GM10248 (cell line): ENCODE measurements at regions of chr2 and their contacts with region 1.

Region 1: GRCh38 chr2:85266146-85267041 is 61.4 kb downstream of the TGOLN2 start:
- DNase-seq: peak; percentile 78
- CTCF ChIP-seq: peak; percentile 82

Region 2: DNA sequence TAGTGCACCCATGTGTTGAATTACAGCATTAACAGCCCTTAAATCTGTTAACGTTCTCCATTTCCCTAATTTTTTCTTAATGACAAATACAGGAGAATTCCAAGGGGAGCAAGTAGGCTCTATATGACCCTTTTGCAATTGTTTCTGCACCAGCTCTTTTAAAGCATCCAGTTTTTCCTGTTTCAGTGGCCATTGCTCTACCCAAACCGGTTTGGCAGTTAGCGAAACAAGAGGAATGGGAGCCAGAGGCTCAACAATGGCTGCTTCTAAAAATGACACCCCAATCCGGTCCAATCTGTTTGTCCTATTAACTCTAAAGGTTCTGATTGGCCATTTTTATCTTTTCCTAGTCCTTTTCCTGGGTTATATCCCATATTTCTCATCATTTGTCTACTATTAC is 792.2 kb before region 1 on chr2:
- CTCF ChIA-PET with region 1: no interaction called
- POLR2A ChIA-PET with region 1: no interaction called
- DNase-seq: no peak
- CTCF ChIP-seq: no peak

Region 3: DNA sequence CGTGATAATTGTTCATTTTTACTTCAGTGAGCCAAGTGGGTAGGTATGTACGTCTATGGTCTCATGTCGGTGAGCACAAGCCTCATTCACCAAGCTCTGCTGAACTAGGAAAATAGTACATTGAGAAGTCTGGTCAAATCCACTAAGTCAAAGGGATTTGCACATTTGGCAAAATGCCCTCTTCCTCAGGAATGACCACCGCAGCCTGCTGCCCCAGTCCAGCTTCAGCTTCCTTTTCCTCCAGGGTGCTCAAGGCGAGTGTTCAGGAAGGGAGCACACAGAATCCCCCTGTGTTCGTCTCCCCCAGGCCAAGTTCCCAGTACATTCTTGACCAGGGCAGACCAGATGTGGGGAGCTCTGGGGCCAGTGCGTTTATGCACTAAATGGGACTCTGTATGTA is 110.2 kb before region 1 on chr2:
- CTCF ChIA-PET with region 1: no interaction called
- POLR2A ChIA-PET with region 1: no interaction called
- DNase-seq: no peak
- CTCF ChIP-seq: no peak

Region 4: DNA sequence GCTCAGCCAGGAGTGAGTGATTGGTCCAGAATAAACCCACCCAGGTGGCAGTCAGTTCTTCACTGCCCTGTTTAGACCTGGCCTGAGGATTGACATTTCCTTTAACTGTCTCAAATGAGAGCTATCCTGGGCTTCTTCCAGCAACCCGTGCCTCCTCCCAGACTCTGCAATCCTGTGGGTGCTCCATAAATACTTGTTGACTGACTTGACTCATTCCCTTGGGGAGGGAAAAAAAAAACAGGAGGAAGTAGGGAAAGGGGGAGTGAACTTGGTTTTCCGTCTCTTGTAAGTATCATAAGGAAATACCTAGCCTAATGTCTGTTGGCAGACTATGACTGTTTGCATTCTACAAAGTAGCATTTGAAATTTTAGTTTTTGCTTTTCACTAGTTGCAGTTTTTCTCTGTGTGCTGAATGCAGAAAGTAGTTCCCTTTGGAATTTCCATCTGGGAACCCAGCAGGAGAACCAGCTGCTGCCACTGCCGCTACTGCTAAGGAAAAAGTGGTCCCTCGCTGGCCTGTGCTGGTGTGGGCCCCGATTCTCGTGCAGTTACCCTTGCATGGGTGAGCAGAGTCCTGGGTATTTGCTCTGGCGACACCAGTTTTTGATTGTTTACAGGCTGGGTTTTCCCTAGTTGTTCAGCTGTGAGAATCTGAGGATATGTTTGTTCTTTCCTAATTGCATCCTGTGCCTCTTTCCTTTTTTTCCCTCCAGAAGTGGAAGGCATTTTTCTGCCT is 17.5 kb before region 1 on chr2:
- CTCF ChIA-PET with region 1: interaction called, 19 read pairs
- POLR2A ChIA-PET with region 1: no interaction called
- DNase-seq: no peak
- CTCF ChIP-seq: no peak

Region 5: DNA sequence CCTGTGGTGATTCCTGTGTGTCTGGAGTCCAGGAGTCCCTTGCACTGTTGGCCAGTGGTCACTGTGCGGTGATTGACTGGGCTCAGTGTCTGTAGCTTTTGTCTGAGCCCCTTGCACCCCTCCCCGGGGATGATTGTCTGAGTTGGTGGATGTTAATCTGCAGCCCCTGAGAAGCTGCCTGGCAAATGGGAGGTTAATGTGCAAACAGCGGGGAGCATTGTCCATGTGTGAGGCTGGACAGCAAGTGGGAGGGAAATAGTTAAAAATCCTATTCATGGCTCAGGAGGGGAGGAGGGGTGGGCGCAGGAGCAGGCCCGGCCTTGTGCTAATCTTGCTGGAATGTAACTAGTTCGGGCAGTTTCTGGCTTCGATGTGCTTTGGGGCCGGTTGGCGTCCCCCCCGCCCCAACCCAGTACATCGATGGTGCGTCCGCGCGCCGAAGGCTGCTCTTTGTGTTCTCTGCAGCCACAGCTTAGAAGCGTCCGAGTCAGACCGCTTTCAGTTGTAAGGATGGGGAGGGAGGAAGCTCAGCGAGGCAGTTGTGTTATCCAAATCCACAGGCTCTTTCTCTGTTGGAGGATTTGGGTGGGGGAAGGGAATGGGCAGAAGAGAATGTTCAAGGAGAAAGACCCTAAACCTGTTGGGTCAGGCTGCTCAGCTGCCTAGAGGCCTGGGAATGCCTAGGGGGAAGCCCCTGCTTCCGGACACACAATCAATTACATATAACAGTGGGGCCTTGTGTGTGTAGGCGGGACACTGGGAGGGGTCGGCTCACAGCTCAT is 10.4 kb before region 1 on chr2:
- CTCF ChIA-PET with region 1: interaction called, 29 read pairs
- POLR2A ChIA-PET with region 1: no interaction called
- DNase-seq: no peak
- CTCF ChIP-seq: no peak

Region 6: DNA sequence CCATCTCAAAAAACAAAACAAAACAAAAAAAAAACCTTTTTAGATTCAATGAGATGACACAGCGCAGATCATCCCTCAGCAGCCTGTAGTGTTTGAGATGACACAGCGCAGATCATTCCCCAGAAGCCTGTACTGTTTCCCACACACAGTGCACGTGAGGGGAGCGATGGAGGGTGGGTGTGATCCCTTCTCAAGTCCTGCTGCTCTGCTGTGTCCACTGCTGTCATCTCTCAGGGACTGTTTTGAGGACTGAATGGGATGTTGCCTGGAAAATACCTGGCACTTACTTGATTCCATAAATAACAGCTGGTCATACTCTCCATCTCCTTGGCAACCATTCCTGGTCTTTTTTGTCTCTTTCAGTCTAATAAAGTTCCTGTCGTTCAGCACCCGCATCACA is 35.7 kb after region 1 on chr2:
- CTCF ChIA-PET with region 1: interaction called, 114 read pairs
- POLR2A ChIA-PET with region 1: no interaction called
- DNase-seq: no peak
- CTCF ChIP-seq: no peak